ENCODE measurements at regions of chr9 and their contacts with region 1.

Region 1: GRCh38 chr9:131739980-131740648 is at the start of gene RAPGEF1:
- DNase-seq: peak; percentile 58 to 92 (median 84)
- ATAC-seq: peak; percentile 71 to 72
- H3K4me3 Mint-ChIP-seq: peak within 1 kb of the TSS; percentile 84 to 96 (median 90)
- H3K27ac Mint-ChIP-seq: peak within 1 kb of the TSS; percentile 81 to 94 (median 90)
- H3K4me1 Mint-ChIP-seq: peaks cover 47 to 65% (median 61%) of the 10 kb centered on the region in 4 donors
- H3K27me3 Mint-ChIP-seq: no peaks in the 10 kb centered on the region
- polyA plus RNA-seq, gene RAPGEF1: 1.6 to 9.0 (median 4.4) TPM

Region 2: GRCh38 chr9:131590908-131591844 is 148.9 kb before region 1 on chr9:
- POLR2A ChIA-PET with region 1: interaction called, 21 read pairs
- DNase-seq: peak; percentile 55 to 85 (median 67)
- ATAC-seq: peak; percentile 95 to 98
- H3K4me3 Mint-ChIP-seq: peak overlapping the region in 3 of 10 donors; percentile 28 to 43 (median 30)
- H3K27ac Mint-ChIP-seq: peak overlapping the region; percentile 32 to 83 (median 72)
- H3K4me1 Mint-ChIP-seq: peaks cover 20 to 36% (median 29%) of the 10 kb centered on the region in 4 donors
- H3K27me3 Mint-ChIP-seq: no peaks in the 10 kb centered on the region

Region 3: GRCh38 chr9:131764568-131764967 is 24.5 kb after region 1 on chr9:
- POLR2A ChIA-PET with region 1: no interaction called
- DNase-seq: no peak
- ATAC-seq: no peak
- H3K4me3 Mint-ChIP-seq: no peak overlapping the region
- H3K27ac Mint-ChIP-seq: no peak overlapping the region
- H3K4me1 Mint-ChIP-seq: peaks cover 0 to 3% (median 0%) of the 10 kb centered on the region in 4 donors
- H3K27me3 Mint-ChIP-seq: peaks cover 0 to 23% (median 5%) of the 10 kb centered on the region in 5 donors